Activated B cell treated with CpG ODN at 0.5 μM for 24 hours (primary cell): ENCODE measurements at regions of chr4 and their contacts with region 1.

Region 1: DNA sequence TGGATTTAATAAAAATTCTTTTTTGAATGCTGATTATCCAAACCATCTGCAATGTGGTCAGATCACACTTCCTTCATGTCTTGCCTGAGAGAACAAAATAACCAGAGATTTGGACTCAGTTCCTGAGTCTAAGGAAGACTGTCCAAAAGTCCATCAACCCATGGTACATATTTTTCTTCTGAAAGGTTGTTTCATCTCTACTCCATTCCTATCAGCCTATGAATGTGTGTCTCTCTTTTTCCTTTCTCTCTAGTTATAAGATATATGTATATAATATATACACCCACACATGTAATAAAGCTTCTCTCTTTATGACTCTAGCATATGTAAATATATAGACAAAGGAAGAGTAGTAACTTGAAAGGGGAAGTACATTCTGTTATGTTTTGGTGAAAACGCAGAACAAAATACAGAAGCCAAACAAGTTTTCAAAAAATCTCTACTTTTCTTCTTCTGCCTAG is 226.9 kb downstream of the ARHGAP24 start:
- DNase-seq: no peak
- ATAC-seq: peak; percentile 80
- H3K4me3 Mint-ChIP-seq: peak overlapping the region; percentile 70
- H3K27ac Mint-ChIP-seq: peak overlapping the region; percentile 93
- H3K4me1 Mint-ChIP-seq: peaks cover 73% of the 10 kb centered on the region
- H3K27me3 Mint-ChIP-seq: no peaks in the 10 kb centered on the region
- CTCF ChIP-seq: no peak

Region 2: DNA sequence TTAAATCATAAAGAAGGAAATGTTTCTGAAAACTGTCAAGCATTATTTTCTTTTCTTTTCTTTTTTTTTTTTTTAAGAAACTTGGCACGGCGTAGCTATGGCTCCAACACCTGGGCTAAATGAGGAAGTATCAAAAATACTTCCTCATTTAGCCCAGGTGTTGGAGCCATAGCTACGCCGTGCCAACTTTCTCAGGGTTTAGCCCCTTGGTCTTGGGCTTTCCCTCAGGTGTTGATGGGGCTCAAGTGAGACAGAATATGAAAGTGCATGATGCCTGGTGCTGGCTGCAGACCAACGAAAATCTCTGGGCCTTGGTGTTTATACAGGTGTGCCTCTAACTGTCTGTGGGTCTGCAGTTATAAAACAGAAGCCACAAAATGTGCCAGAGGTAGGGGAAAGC is 94.3 kb before region 1 on chr4:
- CTCF ChIA-PET with region 1: no interaction called
- POLR2A ChIA-PET with region 1: no interaction called
- intact Hi-C with region 1: loop called (anchors 1 kb)
- DNase-seq: no peak
- ATAC-seq: peak; percentile 90
- H3K4me3 Mint-ChIP-seq: peak overlapping the region; percentile 70
- H3K27ac Mint-ChIP-seq: peak overlapping the region; percentile 92
- H3K4me1 Mint-ChIP-seq: peaks cover 50% of the 10 kb centered on the region
- H3K27me3 Mint-ChIP-seq: no peaks in the 10 kb centered on the region
- CTCF ChIP-seq: no peak

Region 3: DNA sequence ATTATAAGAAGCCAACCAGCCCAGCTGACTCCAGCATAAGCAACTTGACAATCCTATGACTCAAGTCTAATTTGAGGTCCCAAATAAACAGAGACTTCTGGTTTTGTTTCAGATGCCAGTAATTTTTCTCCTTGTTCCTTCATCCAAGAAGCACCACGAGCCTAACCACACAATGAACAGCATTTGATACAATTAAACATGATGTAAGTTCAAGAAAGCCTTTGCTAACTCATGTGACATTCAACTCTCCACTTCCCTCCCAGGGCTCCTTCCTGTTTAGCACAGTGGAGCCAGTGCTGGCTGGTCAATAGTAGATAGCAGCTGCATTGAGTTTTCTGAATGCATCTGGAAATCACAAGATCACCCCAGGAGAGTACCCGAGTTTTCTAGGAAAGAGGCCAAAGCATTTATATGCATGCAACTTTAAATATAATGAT is 20.7 kb before region 1 on chr4:
- CTCF ChIA-PET with region 1: no interaction called
- POLR2A ChIA-PET with region 1: no interaction called
- intact Hi-C with region 1: loop called (anchors 2 kb)
- DNase-seq: no peak
- ATAC-seq: peak; percentile 65
- H3K4me3 Mint-ChIP-seq: no peak overlapping the region
- H3K27ac Mint-ChIP-seq: peak overlapping the region; percentile 74
- H3K4me1 Mint-ChIP-seq: peaks cover 57% of the 10 kb centered on the region
- H3K27me3 Mint-ChIP-seq: no peaks in the 10 kb centered on the region
- CTCF ChIP-seq: no peak

Region 4: DNA sequence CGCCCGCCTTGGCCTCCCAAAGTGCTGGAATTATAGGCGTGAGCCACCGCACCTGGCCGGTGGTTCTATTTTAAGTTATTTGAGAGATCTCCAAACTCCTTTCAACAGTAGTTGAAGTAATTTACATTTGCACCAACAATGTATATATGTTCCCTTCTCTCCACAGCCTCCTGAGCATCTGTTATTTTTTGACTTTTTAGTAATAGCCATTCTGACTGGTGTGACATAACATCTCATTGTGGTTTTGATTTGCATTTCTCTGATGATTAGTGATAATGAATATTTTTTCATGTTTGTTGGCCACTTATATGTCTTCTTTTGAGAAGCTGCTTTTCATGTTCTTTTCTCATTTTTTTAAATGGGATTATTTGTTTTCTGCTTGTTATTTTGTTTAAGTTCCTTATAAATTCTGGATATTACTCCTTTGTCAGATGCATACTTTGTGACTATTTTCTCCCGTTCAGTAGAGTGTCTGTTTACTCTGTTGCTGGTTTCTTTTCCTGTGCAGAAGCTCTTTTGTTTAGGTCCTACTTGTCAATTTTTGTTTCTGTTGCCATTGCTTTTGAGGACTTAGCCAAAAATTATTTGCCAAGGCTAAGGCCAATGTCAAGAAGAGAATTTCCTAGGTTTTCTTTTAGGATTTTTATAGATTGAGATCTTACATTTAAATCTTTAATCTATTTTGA is 13.7 kb before region 1 on chr4:
- CTCF ChIA-PET with region 1: no interaction called
- POLR2A ChIA-PET with region 1: no interaction called
- intact Hi-C with region 1: loop called (anchors 1 kb)
- DNase-seq: no peak
- ATAC-seq: no peak
- H3K4me3 Mint-ChIP-seq: no peak overlapping the region
- H3K27ac Mint-ChIP-seq: peak overlapping the region; percentile 3
- H3K4me1 Mint-ChIP-seq: peaks cover 47% of the 10 kb centered on the region
- H3K27me3 Mint-ChIP-seq: no peaks in the 10 kb centered on the region
- CTCF ChIP-seq: no peak

Region 5: DNA sequence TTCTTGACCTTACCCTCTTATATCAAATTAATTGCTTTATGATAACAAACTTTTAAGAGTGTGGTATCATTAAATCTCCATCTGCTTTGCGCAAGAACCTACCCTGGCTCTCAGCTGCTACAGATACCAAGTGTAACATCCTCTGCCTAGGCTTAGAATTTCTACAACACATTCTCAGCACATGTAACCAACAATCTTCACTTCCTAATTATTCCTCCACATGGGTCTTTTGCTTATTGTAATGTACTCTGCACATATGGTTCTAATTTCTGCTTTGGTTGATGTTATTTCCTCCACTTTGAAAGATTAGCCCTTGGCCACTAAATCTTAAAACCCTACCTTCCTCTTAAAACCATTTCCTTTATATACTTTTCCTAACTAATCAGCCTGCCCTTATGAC is 15.5 kb after region 1 on chr4:
- CTCF ChIA-PET with region 1: interaction called, 3 read pairs
- POLR2A ChIA-PET with region 1: interaction called, 6 read pairs
- intact Hi-C with region 1: loop called (anchors 1 kb)
- DNase-seq: no peak
- ATAC-seq: no peak
- H3K4me3 Mint-ChIP-seq: no peak overlapping the region
- H3K27ac Mint-ChIP-seq: peak overlapping the region; percentile 26
- H3K4me1 Mint-ChIP-seq: peaks cover 50% of the 10 kb centered on the region
- H3K27me3 Mint-ChIP-seq: no peaks in the 10 kb centered on the region
- CTCF ChIP-seq: no peak

Region 6: DNA sequence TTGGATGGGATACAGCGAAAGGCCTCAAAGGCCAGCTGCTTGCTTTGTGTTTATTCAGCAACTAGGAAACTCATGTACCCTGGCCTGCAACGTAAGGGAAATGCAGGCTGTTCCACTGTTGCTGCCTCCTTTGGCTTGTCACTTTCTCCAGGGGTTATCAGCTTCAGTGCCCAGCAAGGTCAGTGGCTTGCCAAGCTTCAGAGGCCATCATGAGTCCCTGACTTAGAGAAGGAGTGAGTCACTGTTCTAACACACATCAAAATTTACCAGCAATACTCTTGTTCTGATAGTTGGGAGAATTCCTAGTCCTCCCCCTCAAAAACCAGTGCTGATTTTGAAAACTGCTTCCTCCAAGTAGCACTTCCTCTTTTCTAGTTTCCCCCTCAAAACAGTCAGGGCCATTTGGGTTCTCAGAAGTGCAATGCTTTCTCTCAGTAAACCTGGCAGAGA is 23.9 kb after region 1 on chr4:
- CTCF ChIA-PET with region 1: no interaction called
- POLR2A ChIA-PET with region 1: interaction called, 20 read pairs
- intact Hi-C with region 1: loop called (anchors 1 kb)
- DNase-seq: peak; percentile 35
- ATAC-seq: peak; percentile 90
- H3K4me3 Mint-ChIP-seq: peak overlapping the region; percentile 51
- H3K27ac Mint-ChIP-seq: peak overlapping the region; percentile 92
- H3K4me1 Mint-ChIP-seq: peaks cover 53% of the 10 kb centered on the region
- H3K27me3 Mint-ChIP-seq: no peaks in the 10 kb centered on the region
- CTCF ChIP-seq: no peak